AG04449 (cell line): ENCODE measurements at regions of chr9 and their contacts with region 1.

Region 1: DNA sequence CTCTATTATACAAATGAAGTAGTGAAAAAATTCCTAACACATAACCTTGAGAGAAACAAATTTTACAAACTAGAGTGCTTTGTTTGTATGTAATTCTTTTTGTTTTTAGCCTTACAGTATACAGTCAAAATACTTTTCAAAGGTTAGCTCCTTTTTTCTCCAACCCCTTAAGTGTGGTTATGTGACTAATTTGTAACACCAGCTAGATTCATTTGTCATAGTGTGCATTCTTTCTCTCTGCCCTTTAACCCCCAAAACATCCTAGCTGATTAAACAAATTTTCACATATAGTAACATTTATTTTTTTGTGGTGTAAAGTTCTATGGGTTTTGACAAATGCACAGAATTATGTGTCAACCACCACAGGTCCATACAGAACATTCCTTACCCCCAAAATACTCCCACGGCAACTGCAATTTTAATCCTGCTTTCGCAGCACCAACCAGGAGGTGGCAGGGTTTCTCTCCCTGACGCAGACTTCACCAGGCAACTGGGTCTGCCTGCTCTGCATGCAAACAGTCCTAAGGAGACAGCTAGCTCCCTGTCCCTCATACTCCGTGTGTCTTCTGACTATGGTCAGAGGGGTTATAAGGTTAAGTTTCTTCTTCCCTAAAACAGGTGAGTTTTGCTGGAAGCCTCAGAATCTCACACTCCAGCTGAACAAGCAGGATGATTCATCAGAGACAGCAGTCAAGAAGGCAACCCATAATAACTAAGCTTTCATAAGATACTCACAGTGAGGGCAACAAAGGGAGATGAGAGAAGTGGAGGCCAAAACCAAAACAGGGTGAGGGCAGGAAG is 44.5 kb upstream of the NR5A1 start:
- DNase-seq: no peak
- H3K4me3 ChIP-seq: no peak overlapping the region
- CTCF ChIP-seq: peak; percentile 78

Region 2: DNA sequence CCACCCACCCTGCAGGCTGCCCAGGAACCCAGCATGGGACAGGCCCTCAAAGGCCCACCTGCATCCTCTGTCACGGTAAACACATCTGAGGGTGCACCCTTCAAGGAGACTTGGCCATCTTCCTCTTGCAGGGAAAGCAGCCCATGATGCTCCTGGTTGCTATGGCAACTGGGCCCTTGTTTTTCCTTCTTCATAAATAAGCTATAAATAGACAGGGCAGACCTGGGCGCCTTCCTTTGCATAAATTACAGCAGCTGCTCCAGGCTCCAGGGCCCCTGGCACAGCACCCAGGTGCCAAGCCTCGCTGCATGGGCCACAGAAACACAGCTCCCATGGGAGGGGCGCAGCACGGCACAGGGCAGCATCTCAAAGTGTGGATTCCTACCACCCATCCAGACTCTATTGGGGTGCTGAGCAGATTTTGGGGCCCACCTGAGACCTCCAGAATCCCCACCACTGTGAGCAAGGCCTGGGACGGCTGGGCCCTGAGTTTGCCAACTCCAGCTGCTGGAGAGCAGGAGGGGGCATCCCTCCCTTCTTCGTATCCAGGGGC is 130.6 kb before region 1 on chr9:
- CTCF ChIA-PET with region 1: interaction called, 19 read pairs
- POLR2A ChIA-PET with region 1: no interaction called
- DNase-seq: no peak
- H3K4me3 ChIP-seq: no peak overlapping the region
- CTCF ChIP-seq: no peak

Region 3: GRCh38 chr9:124562328-124562727 is 10.7 kb after region 1 on chr9:
- CTCF ChIA-PET with region 1: interaction called, 11 read pairs
- POLR2A ChIA-PET with region 1: no interaction called
- DNase-seq: no peak
- H3K4me3 ChIP-seq: no peak overlapping the region
- CTCF ChIP-seq: no peak

Region 4: DNA sequence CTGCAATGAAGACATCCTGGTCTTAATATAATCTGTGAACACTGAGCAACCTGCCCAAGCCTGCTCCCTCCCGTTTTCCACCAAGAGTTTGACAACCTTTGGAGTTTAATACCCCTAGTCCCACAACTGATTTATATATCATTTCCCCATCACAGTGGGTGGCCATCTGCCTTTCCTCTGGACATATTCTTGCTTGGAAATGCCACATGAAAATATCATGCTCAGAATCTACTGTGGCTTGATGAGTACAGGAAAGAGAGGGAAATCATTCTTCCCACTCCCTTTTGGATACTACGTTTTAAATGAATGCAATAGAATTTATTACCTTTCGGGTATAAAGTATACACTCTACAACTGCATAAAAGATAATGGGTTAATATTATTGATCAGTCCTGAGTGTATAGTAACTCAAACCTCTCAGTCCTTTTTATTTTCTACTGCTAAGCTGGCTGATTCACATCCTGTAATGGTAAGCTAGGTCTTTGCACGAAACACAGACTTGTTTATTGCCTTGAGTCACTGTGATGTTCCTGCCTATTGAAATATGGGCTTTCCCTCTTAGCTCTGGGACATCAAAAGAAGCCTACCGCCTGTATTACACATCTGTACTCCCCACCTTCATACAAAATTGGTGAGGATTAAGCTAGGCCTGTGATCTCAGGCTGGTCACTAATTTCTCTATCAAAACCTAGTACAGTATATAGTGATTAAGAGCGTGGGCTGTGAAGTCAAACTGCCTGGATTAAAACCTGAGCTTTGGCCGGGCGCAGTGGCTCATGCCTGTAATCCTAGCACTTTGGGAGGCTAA is 23.1 kb after region 1 on chr9:
- CTCF ChIA-PET with region 1: interaction called, 17 read pairs
- POLR2A ChIA-PET with region 1: no interaction called
- DNase-seq: peak; percentile 45
- H3K4me3 ChIP-seq: no peak overlapping the region
- CTCF ChIP-seq: no peak

Region 5: DNA sequence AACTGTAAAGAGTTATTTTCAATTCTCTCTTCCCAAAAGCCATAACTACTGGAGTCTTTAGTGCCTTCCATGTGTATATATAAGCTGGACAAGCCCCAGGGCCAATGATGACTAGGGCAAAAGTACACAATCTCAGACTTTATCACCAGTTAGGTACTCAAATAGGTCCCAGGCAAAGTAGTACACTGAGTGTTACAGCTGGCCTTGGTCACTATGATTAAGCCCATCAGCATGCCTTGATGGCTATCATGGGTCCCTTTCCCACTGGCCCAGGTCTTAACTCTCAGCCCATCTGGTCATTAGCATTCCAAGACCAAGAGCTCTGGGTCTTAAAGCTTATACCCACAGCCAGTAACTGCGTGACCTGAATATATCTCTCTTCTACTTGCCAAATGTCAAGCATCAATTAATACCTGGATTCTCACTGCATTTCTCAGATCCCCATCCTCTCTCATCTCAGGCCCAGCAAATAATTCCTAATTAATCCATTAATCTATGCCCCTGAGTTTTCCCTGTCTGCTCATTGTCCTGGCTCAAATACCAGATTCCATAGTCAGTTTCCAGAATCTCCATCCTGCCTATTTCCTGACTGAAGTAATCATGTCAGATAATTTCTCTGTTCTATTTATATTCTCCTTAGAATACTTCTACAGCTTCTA is 157.1 kb after region 1 on chr9:
- CTCF ChIA-PET with region 1: interaction called, 119 read pairs
- POLR2A ChIA-PET with region 1: no interaction called
- DNase-seq: no peak
- H3K4me3 ChIP-seq: no peak overlapping the region
- CTCF ChIP-seq: no peak

Region 6: GRCh38 chr9:124754289-124754688 is 202.6 kb after region 1 on chr9:
- CTCF ChIA-PET with region 1: interaction called, 37 read pairs
- POLR2A ChIA-PET with region 1: interaction called, 4 read pairs
- DNase-seq: no peak
- H3K4me3 ChIP-seq: no peak overlapping the region
- CTCF ChIP-seq: peak; percentile 62

Region 7: DNA sequence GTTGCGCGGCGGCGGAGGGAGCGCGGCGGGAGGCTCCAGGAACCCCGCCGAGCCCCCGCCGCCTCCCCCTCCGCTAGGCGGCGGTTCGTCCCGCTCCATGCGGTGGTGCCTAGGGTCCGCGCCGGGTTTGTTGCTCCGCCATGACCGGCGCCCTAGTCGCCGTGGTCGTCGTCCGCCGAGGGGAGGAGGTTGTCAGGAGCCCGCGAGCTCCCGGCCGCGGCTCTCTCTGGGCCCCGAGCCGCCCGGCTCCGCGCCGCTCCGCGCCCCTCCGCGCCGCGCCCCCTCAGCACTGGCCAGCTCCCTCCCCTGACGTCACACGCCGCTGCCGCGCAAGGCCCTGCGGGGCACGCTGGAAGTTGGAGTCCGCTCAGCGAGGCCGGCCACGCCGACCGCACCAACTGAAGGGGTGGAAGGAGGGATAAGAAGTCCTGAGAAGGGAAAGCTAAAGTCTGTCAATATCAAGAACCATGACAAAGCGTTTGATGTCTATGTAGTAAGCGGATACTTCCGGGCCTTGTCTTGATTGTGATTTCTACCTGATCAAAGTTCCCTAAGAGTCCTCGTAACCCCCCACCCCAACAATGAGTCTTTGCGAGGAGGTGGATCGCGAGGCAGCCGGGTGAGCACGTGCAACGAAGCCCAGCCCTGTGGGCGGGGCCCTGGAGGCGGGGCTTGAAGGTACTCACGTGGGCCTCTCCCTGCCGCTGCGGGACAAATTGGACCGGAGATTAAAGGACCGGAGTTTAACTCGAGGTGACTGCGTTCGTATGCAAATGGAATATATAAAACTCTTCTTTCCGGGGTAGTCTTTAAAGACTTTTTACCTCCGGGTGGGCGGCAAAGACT is 219.6 kb after region 1 on chr9 and contains the start of gene NR6A1:
- CTCF ChIA-PET with region 1: interaction called, 30 read pairs
- POLR2A ChIA-PET with region 1: no interaction called
- DNase-seq: peak; percentile 63
- H3K4me3 ChIP-seq: peak within 1 kb of the TSS; percentile 65
- CTCF ChIP-seq: peak; percentile 35

Region 8: GRCh38 chr9:124829284-124829669 is 277.6 kb after region 1 on chr9:
- CTCF ChIA-PET with region 1: no interaction called
- POLR2A ChIA-PET with region 1: no interaction called
- DNase-seq: no peak
- H3K4me3 ChIP-seq: no peak overlapping the region
- CTCF ChIP-seq: no peak